HepG2 (cell line): ENCODE measurements at regions of chr20 and their contacts with region 1.

Region 1: DNA sequence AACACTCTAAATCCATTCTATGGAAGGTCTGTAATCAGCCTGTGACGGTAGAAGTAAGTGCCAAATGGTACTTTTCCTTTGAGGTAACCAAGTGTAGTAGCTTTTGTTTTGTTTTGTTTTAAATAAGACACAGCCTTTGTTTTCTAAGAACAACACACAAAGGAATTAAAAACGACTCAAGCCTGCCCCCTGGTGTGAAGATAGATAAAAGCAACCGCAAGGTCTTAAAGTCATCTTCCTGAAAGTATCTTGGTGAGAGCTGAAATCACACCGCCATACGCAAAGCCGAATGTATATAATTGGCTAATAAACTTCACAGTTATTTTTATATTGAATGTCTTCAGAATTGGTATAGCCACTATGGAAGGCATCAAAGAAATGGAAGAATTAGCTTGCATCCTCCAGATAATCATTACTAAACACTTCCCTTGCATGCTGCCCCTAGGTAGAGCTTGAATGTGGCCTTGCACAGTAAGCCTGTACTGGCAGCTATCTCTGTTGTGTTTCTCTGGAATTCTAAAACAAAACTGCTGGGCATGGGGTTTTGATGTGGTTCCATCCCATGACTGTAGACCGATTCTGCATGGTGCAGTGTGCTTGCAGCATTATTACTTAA is 95.6 kb downstream of the LAMP5 start:
- DNase-seq: peak; percentile 65
- ATAC-seq: peak; percentile 64
- H3K4me3 ChIP-seq: no peak overlapping the region
- H3K27ac ChIP-seq: no peak overlapping the region
- H3K4me1 ChIP-seq: no peaks in the 10 kb centered on the region
- H3K27me3 ChIP-seq: no peaks in the 10 kb centered on the region; a peak in 1 of 5 replicates
- CTCF ChIP-seq: peak; percentile 76
- EP300 ChIP-seq: no peak
- POLR2A ChIP-seq: no peak
- RAD21 ChIP-seq: peak; percentile 72

Region 2: GRCh38 chr20:9407805-9408421 is 202.1 kb before region 1 on chr20:
- CTCF ChIA-PET with region 1: interaction called, 97 read pairs
- POLR2A ChIA-PET with region 1: no interaction called
- in situ Hi-C with region 1: loop called (anchors 5 kb)
- intact Hi-C with region 1: loop called (anchors 1 kb)
- DNase-seq: peak; percentile 65
- ATAC-seq: peak; percentile 98
- H3K4me3 ChIP-seq: no peak overlapping the region
- H3K27ac ChIP-seq: no peak overlapping the region
- H3K4me1 ChIP-seq: no peaks in the 10 kb centered on the region
- H3K27me3 ChIP-seq: no peaks in the 10 kb centered on the region
- CTCF ChIP-seq: peak; percentile 93
- EP300 ChIP-seq: no peak
- POLR2A ChIP-seq: no peak
- RAD21 ChIP-seq: peak; percentile 85

Region 3: GRCh38 chr20:9458138-9458796 is 151.7 kb before region 1 on chr20:
- CTCF ChIA-PET with region 1: interaction called, 9 read pairs
- POLR2A ChIA-PET with region 1: no interaction called
- in situ Hi-C with region 1: no loop called
- intact Hi-C with region 1: loop called (anchors 1 kb)
- DNase-seq: peak; percentile 59
- ATAC-seq: peak; percentile 91
- H3K4me3 ChIP-seq: no peak overlapping the region
- H3K27ac ChIP-seq: no peak overlapping the region
- H3K4me1 ChIP-seq: no peaks in the 10 kb centered on the region
- H3K27me3 ChIP-seq: peaks cover 0 to 4% of the 10 kb centered on the region in 2 experiments; a peak in 1 of 5 replicates
- CTCF ChIP-seq: peak; percentile 62
- EP300 ChIP-seq: no peak
- POLR2A ChIP-seq: no peak
- RAD21 ChIP-seq: no peak

Region 4: GRCh38 chr20:9467995-9468394 is 142.0 kb before region 1 on chr20:
- CTCF ChIA-PET with region 1: interaction called, 6 read pairs
- POLR2A ChIA-PET with region 1: no interaction called
- in situ Hi-C with region 1: loop called (anchors 5 kb)
- intact Hi-C with region 1: loop called (anchors 1 kb)
- DNase-seq: peak; percentile 11
- ATAC-seq: peak; percentile 79
- H3K4me3 ChIP-seq: no peak overlapping the region
- H3K27ac ChIP-seq: no peak overlapping the region
- H3K4me1 ChIP-seq: no peaks in the 10 kb centered on the region
- H3K27me3 ChIP-seq: no peaks in the 10 kb centered on the region; a peak in 1 of 5 replicates
- CTCF ChIP-seq: peak; percentile 51
- EP300 ChIP-seq: no peak
- POLR2A ChIP-seq: no peak
- RAD21 ChIP-seq: no peak

Region 5: GRCh38 chr20:10090588-10091166 is 480.7 kb after region 1 on chr20:
- CTCF ChIA-PET with region 1: no interaction called
- POLR2A ChIA-PET with region 1: no interaction called
- in situ Hi-C with region 1: loop called (anchors 5 kb)
- intact Hi-C with region 1: no loop called
- DNase-seq: peak; percentile 63
- ATAC-seq: peak; percentile 99
- H3K4me3 ChIP-seq: no peak overlapping the region
- H3K27ac ChIP-seq: no peak overlapping the region
- H3K4me1 ChIP-seq: no peaks in the 10 kb centered on the region
- H3K27me3 ChIP-seq: no peaks in the 10 kb centered on the region
- CTCF ChIP-seq: peak; percentile 84
- EP300 ChIP-seq: no peak
- POLR2A ChIP-seq: no peak
- RAD21 ChIP-seq: peak; percentile 78